ENCODE measurements at regions of chr4 and their contacts with region 1.

Region 1: GRCh38 chr4:5050520-5051277 is 581 bp upstream of the STK32B start:
- DNase-seq: peak; percentile 47 to 83 (median 68)
- ATAC-seq: peak; percentile 79 to 94 (median 90)
- H3K4me3 ChIP-seq: peak overlapping the region; percentile 16 to 60 (median 36)
- H3K27ac ChIP-seq: no peak overlapping the region
- H3K4me1 ChIP-seq: peaks cover 0 to 9% (median 4%) of the 10 kb centered on the region in 3 donors
- H3K27me3 ChIP-seq: peaks cover 0 to 7% (median 0%) of the 10 kb centered on the region in 4 donors
- CTCF ChIP-seq: peak; percentile 22 to 54 (median 36)

Region 2: DNA sequence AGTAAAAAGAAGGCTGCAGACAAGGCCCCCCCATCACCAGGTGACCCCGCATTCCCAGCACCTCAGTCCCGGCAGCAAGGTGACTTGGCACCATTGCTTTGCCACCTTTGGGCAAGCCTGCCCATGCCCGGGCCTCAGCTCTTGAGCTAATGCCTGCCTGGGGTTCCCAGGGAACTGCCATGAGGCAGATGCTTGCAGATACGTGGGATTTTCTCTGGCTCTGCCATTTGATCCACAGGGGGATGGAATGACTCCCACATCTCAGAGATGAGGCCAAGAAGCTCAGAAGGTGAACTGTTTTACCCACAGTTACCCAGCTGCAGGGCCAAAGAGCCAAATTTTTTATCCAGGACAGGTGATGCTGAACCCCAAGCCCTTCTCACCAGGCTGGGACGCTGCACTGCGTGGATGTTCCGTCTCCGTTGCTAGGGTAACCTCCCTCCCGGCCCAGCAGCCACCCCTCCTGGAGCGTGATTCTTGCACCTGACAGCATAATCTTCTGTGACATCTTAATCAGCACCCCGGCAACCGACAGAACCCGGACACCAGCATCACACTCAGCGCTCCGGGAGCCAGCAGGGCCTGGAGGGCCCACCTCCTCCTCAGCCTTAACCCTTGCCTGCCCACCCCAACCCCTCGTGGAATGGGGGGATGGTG is 206.9 kb before region 1 on chr4:
- intact Hi-C with region 1: no loop called
- DNase-seq: no peak
- ATAC-seq: peak in 2 of 4 donors; percentile 22 to 69
- H3K4me3 ChIP-seq: no peak overlapping the region
- H3K27ac ChIP-seq: no peak overlapping the region
- H3K4me1 ChIP-seq: no peaks in the 10 kb centered on the region
- H3K27me3 ChIP-seq: peaks cover 0 to 5% (median 2%) of the 10 kb centered on the region in 4 donors
- CTCF ChIP-seq: no peak

Region 3: DNA sequence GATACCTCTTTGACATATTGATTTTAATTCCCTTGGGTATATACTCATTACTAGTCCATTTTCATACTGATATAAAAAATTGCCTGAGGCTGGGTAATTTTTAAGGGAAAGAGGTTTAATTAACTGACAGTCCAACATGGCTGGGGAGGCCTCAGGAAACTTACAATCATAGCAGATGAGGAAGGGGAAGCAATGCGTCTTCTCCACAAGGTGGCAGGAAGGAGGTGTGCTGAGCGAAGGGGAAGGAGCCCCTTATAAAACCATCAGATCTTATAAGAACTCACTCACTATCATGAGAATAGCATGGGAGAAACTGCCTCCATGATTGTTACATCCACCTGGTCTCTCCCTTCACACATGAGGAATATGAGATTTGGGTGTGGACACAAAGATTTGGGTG is 148.8 kb before region 1 on chr4:
- intact Hi-C with region 1: no loop called
- DNase-seq: no peak
- ATAC-seq: no peak
- H3K4me3 ChIP-seq: no peak overlapping the region
- H3K27ac ChIP-seq: no peak overlapping the region
- H3K4me1 ChIP-seq: no peaks in the 10 kb centered on the region
- H3K27me3 ChIP-seq: no peaks in the 10 kb centered on the region
- CTCF ChIP-seq: no peak

Region 4: DNA sequence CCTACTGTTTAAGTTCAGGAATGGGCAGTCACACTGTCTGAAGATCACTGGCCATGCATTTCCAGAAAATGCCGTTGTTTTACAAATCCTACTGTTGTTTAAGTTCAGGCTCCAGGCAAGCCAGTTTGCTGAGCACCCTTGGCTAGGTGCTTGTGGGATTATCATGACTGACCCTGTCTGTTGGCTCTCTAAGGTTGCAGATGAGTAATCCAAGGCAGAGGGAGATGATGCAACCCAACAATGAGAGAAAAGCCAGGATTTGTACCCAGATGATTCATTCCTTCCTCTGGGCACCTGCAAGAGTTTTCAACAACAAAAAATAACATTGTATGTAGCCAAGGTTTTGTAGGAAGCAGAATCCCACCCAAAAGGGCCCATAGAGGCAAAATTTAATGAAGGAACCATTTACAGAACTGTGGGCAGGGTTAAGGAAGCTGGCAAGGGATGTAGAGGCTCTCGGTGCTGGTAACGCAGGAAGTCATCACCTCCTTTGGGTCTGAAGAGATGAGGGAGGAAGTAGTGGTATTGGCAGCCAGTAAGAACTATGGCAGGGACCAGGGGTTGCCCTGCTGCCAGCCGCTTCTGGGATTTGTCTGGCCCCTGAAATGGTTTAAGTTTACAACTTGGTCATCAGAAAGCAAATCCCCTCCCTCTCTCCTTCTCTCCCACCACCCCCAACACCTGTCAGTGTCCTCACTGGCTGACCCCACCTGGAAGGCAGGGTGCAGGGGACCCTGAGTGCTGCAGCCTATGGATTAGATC is 136.5 kb before region 1 on chr4:
- intact Hi-C with region 1: no loop called
- DNase-seq: no peak
- ATAC-seq: peak in 1 of 4 donors; percentile 37
- H3K4me3 ChIP-seq: no peak overlapping the region
- H3K27ac ChIP-seq: no peak overlapping the region
- H3K4me1 ChIP-seq: no peaks in the 10 kb centered on the region
- H3K27me3 ChIP-seq: no peaks in the 10 kb centered on the region
- CTCF ChIP-seq: no peak

Region 5: GRCh38 chr4:5142726-5143125 is 92.0 kb after region 1 on chr4:
- intact Hi-C with region 1: loop called in 1 of 3 experiments (anchors 5 kb)
- DNase-seq: peak in 1 of 6 donors; percentile 28
- ATAC-seq: peak in 3 of 4 donors; percentile 19 to 53 (median 42)
- H3K4me3 ChIP-seq: no peak overlapping the region
- H3K27ac ChIP-seq: no peak overlapping the region
- H3K4me1 ChIP-seq: peaks cover 0 to 7% (median 6%) of the 10 kb centered on the region in 3 donors
- H3K27me3 ChIP-seq: no peaks in the 10 kb centered on the region
- CTCF ChIP-seq: peak in 3 of 4 donors; percentile 17 to 22 (median 20)

Region 6: GRCh38 chr4:5165420-5166369 is 115.0 kb after region 1 on chr4:
- intact Hi-C with region 1: no loop called
- DNase-seq: no peak
- ATAC-seq: no peak
- H3K4me3 ChIP-seq: no peak overlapping the region
- H3K27ac ChIP-seq: no peak overlapping the region
- H3K4me1 ChIP-seq: no peaks in the 10 kb centered on the region
- H3K27me3 ChIP-seq: peaks cover 0 to 4% (median 0%) of the 10 kb centered on the region in 4 donors
- CTCF ChIP-seq: no peak

Region 7: DNA sequence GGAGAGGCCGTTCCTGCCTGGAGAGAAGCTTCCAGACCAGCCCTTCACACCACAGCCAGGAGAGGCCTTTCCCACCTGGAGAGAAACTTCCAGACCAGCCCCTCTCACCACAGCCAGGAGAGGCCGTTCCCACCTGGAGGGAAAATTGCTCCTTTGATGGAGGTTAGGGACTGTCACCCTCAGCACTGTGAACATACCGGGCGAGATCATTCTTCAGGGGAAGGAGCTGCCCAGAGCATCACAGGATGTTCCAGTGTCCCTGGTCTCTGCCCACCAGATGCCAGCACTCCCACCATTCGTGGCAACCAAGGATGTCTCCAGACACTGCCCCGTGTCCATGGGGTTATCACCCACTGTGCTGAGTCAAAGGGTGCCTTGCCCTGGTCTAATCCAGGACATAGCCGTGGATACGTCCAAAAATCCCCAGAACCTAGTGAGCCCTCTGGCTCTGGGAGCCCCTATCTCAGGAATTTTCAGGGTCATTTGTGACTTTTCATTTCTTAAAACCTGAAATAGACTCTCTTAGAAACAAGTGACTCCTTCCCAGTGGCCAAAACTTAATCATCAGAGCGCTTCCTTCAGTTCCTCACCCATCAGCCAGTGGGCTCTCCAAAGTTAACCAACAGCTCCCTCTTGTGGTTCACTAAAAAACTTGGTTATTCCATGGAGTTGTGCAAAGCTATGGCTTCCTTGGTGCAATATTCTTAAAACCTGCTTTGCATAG is 762.0 kb after region 1 on chr4:
- intact Hi-C with region 1: loop called in 1 of 3 experiments (anchors 10 kb)
- DNase-seq: peak in 1 of 6 donors; percentile 35
- ATAC-seq: peak; percentile 71 to 86 (median 85)
- H3K4me3 ChIP-seq: no peak overlapping the region
- H3K27ac ChIP-seq: no peak overlapping the region
- H3K4me1 ChIP-seq: no peaks in the 10 kb centered on the region
- H3K27me3 ChIP-seq: no peaks in the 10 kb centered on the region
- CTCF ChIP-seq: peak; percentile 28 to 58 (median 53)

Measured in pancreas (tissue), 10 donors.